MCF 10A (cell line): ENCODE measurements at regions of chr15 and their contacts with region 1.

Region 1: GRCh38 chr15:67521029-67521811 is at the start of gene C15orf61:
- DNase-seq: peak; percentile 90
- H3K4me3 Mint-ChIP-seq: peak within 1 kb of the TSS; percentile 74
- H3K27ac Mint-ChIP-seq: peak within 1 kb of the TSS; percentile 59
- H3K4me1 Mint-ChIP-seq: peaks cover 13% of the 10 kb centered on the region
- H3K27me3 Mint-ChIP-seq: no peaks in the 10 kb centered on the region
- CTCF ChIP-seq: no peak
- total RNA-seq, gene C15orf61: 7.9 and 10.5 TPM in 2 replicates

Region 2: DNA sequence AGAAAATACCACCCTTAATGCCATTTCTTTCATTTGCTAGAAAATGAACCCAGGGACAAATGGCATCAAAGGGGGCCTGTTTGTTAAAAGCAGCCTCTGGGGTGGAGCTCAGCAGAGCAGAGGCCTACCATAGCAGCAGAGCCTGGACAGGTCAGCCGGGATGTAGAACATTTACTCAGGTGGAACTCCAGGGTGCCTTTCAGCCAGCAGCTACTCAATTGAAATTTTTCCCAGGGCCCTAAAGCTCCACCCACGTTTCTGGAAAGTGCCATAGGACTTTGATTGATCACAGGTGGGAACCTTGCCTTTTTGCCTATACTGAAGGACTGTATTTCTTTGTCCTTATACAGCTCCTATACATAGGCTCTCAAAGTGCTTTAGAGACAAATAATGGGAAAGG is 74.8 kb before region 1 on chr15:
- CTCF ChIA-PET with region 1: no interaction called
- POLR2A ChIA-PET with region 1: no interaction called
- intact Hi-C with region 1: no loop called
- DNase-seq: no peak
- H3K4me3 Mint-ChIP-seq: no peak overlapping the region
- H3K27ac Mint-ChIP-seq: no peak overlapping the region
- H3K4me1 Mint-ChIP-seq: no peaks in the 10 kb centered on the region
- H3K27me3 Mint-ChIP-seq: no peaks in the 10 kb centered on the region
- CTCF ChIP-seq: no peak

Region 3: DNA sequence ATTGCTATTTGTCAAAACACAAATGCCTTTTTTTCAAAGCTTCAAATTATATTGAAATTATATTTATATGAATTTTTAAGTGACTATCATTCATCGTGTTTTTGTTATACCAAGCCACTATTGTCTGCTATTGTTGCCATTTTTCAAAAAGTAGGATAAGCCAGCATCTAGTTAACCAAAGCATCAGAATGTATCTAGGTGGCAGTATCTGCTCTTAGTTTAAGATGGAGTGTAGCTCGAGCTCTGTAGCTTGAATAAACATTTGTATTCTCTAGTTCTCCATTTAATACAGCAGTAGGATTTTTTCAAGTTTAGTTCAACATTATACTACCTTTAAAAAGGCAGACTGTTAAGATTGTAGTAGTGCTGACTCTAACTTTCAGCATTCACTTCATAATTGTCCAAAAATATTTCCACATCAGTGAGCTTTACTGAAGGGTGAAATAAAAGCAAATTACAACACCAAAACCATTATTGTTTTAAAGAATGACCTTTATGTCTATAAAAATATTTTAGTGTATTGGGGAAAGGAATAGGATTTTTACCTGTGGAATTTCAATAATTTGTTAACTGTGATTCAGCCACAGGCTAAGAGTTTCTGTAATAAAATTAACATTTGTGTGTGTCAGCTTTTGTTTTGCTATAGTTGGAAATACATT is 19.9 kb before region 1 on chr15:
- CTCF ChIA-PET with region 1: interaction called, 4 read pairs
- POLR2A ChIA-PET with region 1: interaction called, 59 read pairs
- intact Hi-C with region 1: no loop called
- DNase-seq: peak; percentile 25
- H3K4me3 Mint-ChIP-seq: no peak overlapping the region
- H3K27ac Mint-ChIP-seq: no peak overlapping the region
- H3K4me1 Mint-ChIP-seq: peaks cover 13% of the 10 kb centered on the region
- H3K27me3 Mint-ChIP-seq: no peaks in the 10 kb centered on the region
- CTCF ChIP-seq: peak; percentile 44

Region 4: GRCh38 chr15:67510597-67511225 is 10.5 kb before region 1 on chr15:
- CTCF ChIA-PET with region 1: no interaction called
- POLR2A ChIA-PET with region 1: interaction called, 59 read pairs
- intact Hi-C with region 1: no loop called
- DNase-seq: no peak
- H3K4me3 Mint-ChIP-seq: no peak overlapping the region
- H3K27ac Mint-ChIP-seq: no peak overlapping the region
- H3K4me1 Mint-ChIP-seq: peaks cover 16% of the 10 kb centered on the region
- H3K27me3 Mint-ChIP-seq: no peaks in the 10 kb centered on the region
- CTCF ChIP-seq: no peak

Region 5: DNA sequence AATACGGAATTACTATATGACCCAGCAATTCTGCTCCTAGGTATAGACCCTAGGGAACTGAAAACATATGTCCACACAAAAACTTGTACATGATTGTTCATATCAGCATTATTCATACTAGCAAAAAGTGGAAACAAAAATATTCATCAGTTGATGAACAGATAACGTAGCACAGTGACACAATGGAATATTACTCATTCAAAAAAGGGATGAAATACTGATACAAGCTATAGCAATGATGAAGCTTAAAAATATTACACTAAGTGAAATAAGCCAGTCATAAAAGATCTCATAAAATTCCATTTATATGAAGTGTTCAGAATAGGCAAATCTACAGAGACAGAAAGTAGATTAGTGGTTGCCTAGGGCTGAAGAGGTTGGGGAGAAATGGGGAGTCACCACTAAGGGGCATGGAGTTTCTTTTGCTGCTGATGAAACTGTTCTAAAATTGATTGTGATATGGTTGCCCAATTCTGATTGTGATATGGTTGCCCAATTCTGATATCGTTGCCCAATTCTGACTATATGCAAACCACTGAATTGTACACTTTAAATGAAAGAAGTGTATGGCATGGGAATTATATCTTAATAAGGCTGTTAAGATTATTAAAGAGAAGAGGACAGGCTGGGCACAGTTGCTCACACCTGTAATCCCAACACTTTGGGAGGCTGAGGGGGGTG is 10.3 kb after region 1 on chr15:
- CTCF ChIA-PET with region 1: interaction called, 3 read pairs
- POLR2A ChIA-PET with region 1: interaction called, 36 read pairs
- intact Hi-C with region 1: no loop called
- DNase-seq: peak; percentile 13
- H3K4me3 Mint-ChIP-seq: no peak overlapping the region
- H3K27ac Mint-ChIP-seq: peak overlapping the region; percentile 79
- H3K4me1 Mint-ChIP-seq: peaks cover 7% of the 10 kb centered on the region
- H3K27me3 Mint-ChIP-seq: no peaks in the 10 kb centered on the region
- CTCF ChIP-seq: no peak

Region 6: GRCh38 chr15:67542420-67543347 is 21.5 kb after region 1 on chr15 and contains the start of gene MAP2K5:
- CTCF ChIA-PET with region 1: no interaction called
- POLR2A ChIA-PET with region 1: interaction called, 91 read pairs
- intact Hi-C with region 1: no loop called
- DNase-seq: peak; percentile 77
- H3K4me3 Mint-ChIP-seq: peak within 1 kb of the TSS; percentile 96
- H3K27ac Mint-ChIP-seq: peak within 1 kb of the TSS; percentile 89
- H3K4me1 Mint-ChIP-seq: peaks cover 15% of the 10 kb centered on the region
- H3K27me3 Mint-ChIP-seq: no peaks in the 10 kb centered on the region
- CTCF ChIP-seq: no peak
- total RNA-seq, gene MAP2K5: 24.4 and 29.0 TPM in 2 replicates

Region 7: GRCh38 chr15:67746022-67746421 is 224.8 kb after region 1 on chr15:
- CTCF ChIA-PET with region 1: no interaction called
- POLR2A ChIA-PET with region 1: interaction called, 3 read pairs
- intact Hi-C with region 1: loop called (anchors 5 kb)
- DNase-seq: peak; percentile 72
- H3K4me3 Mint-ChIP-seq: peak overlapping the region; percentile 52
- H3K27ac Mint-ChIP-seq: peak overlapping the region; percentile 89
- H3K4me1 Mint-ChIP-seq: peaks cover 27% of the 10 kb centered on the region
- H3K27me3 Mint-ChIP-seq: no peaks in the 10 kb centered on the region
- CTCF ChIP-seq: no peak

Region 8: DNA sequence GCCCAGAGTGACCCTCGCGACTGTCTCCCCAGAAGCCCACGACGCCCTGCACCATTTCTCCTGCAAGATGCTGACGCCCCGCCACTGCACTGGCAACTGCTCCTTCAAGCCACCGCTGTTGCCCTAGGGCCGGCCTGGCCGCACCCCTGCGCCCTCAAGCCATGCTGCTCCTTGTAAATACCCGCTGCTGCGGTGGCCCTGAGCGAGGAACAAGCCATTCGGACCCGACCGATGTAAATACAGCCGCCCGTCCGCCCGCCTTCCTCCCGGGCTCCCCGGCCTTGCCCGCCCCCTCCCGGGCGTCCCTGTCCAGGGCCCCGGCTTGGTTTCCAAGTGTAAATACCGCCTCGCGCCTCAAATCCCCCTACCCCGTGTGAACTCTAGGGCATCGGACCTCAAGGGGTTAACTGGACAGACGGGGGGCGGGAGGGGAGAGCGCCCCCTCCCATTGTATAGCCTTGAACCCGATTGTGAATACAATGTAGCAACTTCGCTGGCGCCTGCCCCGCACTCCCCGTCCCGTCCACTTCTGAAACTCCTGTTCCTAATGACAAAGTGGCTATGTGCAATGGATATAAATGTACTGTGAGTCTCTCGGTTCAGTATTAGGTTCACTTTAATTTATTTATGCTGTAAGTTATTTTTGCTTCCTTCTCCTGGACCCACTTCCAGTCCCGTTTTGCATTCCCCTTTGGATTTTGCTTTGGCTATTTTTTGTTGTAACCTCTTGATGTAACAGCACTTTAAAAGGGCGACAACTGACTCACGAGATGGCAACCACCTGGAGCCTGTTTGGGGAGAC is 312.7 kb after region 1 on chr15:
- CTCF ChIA-PET with region 1: interaction called, 3 read pairs
- POLR2A ChIA-PET with region 1: interaction called, 3 read pairs
- intact Hi-C with region 1: loop called (anchors 1 kb)
- DNase-seq: peak; percentile 41
- H3K4me3 Mint-ChIP-seq: peak overlapping the region; percentile 51
- H3K27ac Mint-ChIP-seq: no peak overlapping the region
- H3K4me1 Mint-ChIP-seq: peaks cover 9% of the 10 kb centered on the region
- H3K27me3 Mint-ChIP-seq: no peaks in the 10 kb centered on the region
- CTCF ChIP-seq: peak; percentile 57